Cardiac septum (tissue), 1 donor: ENCODE measurements at regions of chr6 and their contacts with region 1.

Region 1: DNA sequence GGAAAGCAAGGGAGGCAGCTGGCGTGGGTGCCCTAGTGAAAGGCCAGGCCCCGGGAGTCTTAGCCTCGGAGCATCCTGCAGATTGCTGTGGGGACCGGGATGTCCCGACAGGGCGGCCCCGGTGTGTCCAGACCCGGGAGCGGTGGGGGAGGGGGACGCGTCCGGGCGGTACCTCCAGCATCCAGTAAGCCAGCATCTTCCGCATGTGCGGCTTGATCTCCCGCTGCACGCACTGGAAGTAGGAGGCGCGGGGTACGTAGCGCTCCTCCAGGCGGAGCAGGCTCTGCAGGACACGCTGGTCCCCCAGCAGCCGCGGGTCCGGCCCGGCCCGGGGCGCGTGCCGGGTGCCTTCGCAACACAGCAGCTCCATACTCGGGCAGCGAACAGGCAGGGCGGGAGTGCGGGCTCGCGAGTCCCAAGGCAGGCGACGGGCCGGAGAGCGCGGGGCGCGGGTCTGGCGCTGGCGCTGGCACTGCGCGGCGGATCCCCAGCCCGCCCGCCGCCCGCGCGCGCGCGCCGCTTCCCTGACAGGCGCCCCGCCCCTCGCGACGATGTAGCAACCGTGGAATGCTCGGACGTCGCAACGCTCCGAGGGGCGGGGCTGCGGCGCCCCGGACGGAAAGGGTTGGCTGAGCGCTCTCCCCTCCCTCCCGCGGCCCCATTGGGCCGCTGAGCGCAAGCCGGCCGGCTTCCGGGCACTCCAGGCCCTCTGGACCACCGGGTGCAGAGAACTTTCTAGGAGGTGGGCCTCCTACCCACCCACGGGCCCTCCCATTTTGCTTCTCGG is at the start of gene CCND3:
- DNase-seq: peak; percentile 97
- total RNA-seq, gene CCND3: 33.5 TPM

Region 2: DNA sequence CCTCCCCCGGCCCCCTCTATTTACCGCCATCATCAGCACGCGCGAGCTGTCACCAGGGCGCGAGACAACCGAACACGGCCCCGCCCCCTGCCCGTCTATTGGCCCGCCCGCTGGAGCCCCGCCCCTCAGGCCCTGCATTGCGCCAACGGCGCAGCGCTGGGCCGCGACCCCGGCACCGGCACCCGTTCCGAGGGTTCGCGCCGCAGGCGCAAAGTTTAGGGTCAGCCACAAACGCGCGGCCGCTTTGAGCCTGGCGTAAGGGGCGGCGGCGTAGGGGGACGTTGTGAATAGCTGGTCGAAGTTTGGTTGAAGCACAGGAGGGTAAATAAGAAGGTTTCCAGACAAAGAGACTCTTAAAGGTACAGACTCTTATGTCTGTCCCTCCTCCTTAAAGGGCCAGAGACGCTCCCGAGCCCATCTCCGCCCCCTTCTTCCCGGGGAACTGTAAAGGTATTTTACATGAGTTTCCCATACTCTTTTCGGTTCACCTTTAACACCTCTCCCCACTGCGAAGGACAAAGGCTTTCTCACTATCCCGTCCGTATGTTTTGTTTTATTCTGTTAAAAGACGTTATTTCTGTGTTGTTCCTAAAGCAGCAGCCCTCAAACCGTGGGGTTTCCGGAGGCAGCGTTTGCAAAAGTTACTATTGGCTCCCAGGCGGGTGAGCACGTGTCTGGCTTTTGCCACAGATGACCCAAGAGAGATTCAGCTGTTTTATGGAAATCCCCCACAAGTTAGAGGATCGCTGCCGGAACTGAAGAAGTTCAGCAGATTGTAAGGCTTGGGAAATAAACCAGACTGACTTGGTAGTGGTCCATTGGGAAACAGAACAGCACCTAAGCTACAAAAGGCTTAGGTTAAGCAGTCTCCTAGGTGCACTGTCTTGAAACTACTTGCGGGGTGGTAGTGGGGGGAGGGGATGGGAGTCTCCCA is 45.9 kb before region 1 on chr6 and contains the start of gene USP49:
- intact Hi-C with region 1: loop called (anchors 1 kb)
- DNase-seq: peak; percentile 94
- total RNA-seq, gene USP49: 1.7 TPM